Prostate gland (tissue), 2 donors: ENCODE measurements at regions of chr16 and their contacts with region 1.

Region 1: GRCh38 chr16:58629572-58630104 is at the start of gene CNOT1:
- DNase-seq: peak; percentile 99
- H3K4me3 ChIP-seq: peak within 1 kb of the TSS; percentile 86 to 98
- H3K27ac ChIP-seq: peak within 1 kb of the TSS; percentile 98 to 99
- H3K4me1 ChIP-seq: no peaks in the 10 kb centered on the region
- H3K27me3 ChIP-seq: no peaks in the 10 kb centered on the region
- CTCF ChIP-seq: peak in 1 of 4 experiments; percentile 38
- POLR2A ChIP-seq: peak; percentile 87
- total RNA-seq, gene CNOT1: 102 to 190 TPM

Region 2: DNA sequence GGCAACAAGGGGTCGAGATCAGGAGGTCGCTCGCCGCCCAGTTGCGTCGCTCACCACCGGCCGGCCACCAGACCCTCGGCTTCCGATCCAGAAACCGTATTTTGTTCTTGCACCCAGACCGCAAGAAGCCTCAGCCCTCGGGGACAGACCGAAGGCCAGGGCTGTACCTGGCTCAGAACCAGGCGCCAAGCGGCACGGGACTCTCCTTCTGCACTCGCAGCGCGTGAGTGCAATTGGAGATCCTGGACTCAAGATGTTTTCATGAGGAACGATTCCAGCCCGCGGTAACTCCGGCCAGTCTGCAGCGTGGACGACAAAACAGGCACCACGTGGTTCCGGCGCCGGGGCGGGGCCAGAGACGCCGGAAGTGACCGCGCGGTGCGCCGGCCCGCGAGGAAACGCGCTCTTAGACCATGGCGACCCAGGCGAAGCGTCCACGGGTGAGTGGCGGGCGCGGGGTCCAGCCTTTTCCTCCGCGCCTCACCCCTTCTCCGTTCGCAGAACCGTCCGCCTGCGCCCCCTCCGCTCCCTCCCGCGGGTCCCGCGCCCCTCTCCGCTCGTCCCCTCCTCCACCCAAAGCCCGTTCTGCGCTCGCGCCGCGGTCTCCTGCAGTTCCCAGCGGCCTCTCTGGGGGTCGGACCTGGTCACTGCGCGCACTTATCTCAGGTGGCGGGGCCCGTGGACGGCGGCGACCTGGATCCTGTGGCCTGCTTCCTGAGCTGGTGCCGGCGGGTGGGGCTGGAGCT is 114.3 kb before region 1 on chr16 and contains the start of gene SETD6:
- intact Hi-C with region 1: loop called (anchors 5 kb)
- DNase-seq: peak; percentile 88
- H3K4me3 ChIP-seq: peak within 1 kb of the TSS; percentile 59 to 84
- H3K27ac ChIP-seq: peak within 1 kb of the TSS; percentile 74 to 75
- H3K4me1 ChIP-seq: peaks cover 6% of the 10 kb centered on the region
- H3K27me3 ChIP-seq: no peaks in the 10 kb centered on the region
- CTCF ChIP-seq: peak in 2 of 4 experiments; percentile 14 to 37
- POLR2A ChIP-seq: peak; percentile 13
- total RNA-seq, gene SETD6: 45.4 to 55.8 TPM

Region 3: DNA sequence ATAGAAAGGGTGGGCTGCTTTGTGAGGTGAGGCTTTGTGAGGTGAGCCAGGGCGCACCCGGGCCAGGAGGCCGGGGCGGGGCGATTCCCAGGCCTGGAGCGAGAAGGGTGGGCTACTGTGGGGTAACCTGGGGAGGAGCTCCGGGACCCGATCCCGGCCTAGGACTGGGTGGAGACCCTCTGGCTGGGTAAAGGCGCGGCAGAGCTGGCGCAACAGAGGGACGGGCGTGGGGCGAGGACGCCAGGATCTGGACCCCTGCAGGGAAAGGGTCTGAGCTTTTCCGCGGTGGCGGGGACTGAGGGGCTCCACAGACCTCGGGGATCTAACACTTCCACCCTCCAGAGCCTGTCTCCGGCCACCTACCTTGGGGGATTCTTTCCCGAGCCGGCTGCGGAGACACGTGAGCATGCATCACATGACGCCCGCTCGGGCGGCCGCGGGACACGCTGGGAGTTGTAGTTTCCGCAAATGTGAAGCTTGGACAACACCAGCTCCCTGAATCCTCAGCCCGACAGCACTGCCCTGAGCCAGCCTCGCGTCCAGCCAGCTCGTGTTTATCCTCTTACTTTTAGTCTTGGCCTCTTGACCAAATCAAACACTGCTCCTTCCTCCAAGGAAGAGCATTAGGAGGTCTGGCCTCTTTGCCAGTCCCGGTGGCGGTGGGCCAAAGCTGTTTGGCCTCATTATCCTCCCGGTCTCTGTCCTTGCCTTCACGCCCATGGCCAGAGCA is 54.9 kb after region 1 on chr16 and contains the start of gene SLC38A7:
- intact Hi-C with region 1: loop called (anchors 5 kb)
- DNase-seq: peak; percentile 84
- H3K4me3 ChIP-seq: peak within 1 kb of the TSS; percentile 57 to 81
- H3K27ac ChIP-seq: peak within 1 kb of the TSS; percentile 35 to 67
- H3K4me1 ChIP-seq: no peaks in the 10 kb centered on the region
- H3K27me3 ChIP-seq: no peaks in the 10 kb centered on the region
- CTCF ChIP-seq: no peak
- POLR2A ChIP-seq: peak; percentile 19
- total RNA-seq, gene SLC38A7: 20.6 to 29.9 TPM